Sigmoid colon (tissue), 7 donors: ENCODE measurements at regions of chr10 and their contacts with region 1.

Region 1: GRCh38 chr10:78510566-78511323 is 477.1 kb downstream of the RPS24 start:
- DNase-seq: no peak
- H3K4me3 ChIP-seq: no peak overlapping the region
- H3K27ac ChIP-seq: peak overlapping the region; percentile 45 to 86 (median 82)
- H3K4me1 ChIP-seq: peaks cover 5 to 93% (median 88%) of the 10 kb centered on the region in 4 donors
- H3K27me3 ChIP-seq: no peaks in the 10 kb centered on the region
- CTCF ChIP-seq: no peak
- EP300 ChIP-seq: no peak
- POLR2A ChIP-seq: no peak

Region 2: DNA sequence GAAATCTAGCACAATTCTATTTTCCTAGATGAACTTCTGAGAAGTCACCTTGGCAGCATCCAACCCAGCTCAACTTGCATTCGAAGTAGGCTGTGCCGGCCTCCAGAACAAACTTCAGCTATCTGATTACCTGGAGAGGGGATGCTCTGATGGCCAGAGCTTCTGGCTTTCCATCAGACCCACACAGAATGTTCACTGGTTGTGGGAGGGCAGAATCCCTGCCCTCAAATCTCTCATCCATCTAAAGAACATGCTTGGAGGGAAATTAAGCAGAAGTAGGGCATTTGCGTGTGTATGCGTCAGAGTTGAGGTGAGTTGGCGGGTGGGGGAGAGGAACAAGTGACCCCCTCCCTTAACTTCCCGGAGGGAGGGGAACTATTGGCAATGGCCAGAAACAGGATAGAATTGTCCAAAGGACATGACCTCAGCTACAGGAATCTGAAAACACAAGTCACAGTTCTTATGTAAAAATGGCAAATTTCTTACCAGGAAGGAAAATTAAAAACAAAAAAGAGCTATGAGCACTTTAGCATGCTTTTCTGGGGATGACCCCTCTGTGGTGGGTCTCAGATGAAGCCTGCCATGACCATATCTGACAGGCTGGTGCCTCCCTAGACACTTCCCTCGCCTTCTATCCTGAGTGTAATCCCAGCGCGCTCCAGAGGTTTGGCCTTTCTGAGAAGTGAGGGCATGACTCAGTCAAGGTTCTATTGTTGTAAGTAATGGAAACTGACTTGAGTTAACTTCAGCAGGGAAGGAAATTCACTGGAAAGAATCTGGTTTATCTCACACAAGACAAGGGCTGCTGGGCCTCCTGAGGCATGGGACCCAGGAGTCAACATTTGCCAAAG is 198.3 kb before region 1 on chr10:
- intact Hi-C with region 1: loop called (anchors 5 kb)
- DNase-seq: peak; percentile 87
- H3K4me3 ChIP-seq: no peak overlapping the region
- H3K27ac ChIP-seq: peak overlapping the region; percentile 16 to 93 (median 88)
- H3K4me1 ChIP-seq: peaks cover 0 to 69% (median 49%) of the 10 kb centered on the region in 4 donors
- H3K27me3 ChIP-seq: no peaks in the 10 kb centered on the region
- CTCF ChIP-seq: peak in 1 of 4 experiments; percentile 16
- EP300 ChIP-seq: peak; percentile 66 to 92 (median 84)
- POLR2A ChIP-seq: no peak

Region 3: DNA sequence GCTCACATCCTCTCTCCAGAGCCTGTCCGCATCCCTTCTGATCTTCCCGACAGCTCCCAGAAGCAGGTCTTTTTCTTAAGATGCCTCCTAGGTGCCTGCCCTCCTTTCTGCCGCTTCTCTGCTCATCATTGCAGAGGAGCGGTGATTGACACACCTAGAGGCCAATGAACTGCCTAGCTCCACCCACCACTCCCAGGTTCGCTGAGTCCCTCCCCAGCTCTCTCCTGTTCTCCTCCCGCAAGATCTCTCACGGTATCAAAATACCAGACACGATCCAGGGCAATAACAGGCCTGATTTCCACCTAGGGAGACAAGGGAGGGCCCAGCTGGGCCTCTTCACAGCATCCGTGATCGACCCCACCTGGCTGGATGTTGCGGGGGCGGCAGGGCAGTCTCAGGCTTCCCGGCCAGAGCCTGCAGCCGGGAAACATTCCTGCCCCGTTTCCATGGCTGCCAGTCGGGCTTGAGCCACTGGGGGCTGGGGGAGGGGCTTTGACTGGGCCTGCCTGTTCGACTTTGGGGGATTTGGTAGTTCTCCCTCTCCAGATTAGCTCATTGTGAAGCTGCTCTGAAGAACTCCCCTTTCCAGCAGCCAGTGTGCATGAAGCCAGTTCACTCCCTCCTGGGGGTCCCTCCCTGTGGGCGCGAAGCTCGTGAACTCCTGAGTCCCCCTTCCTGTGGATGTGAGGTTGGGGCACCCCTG is 103.6 kb before region 1 on chr10:
- intact Hi-C with region 1: no loop called
- DNase-seq: peak; percentile 89
- H3K4me3 ChIP-seq: peak overlapping the region in 3 of 4 donors; percentile 18 to 24 (median 20)
- H3K27ac ChIP-seq: peak overlapping the region; percentile 30 to 80 (median 76)
- H3K4me1 ChIP-seq: peaks cover 0 to 35% (median 30%) of the 10 kb centered on the region in 4 donors
- H3K27me3 ChIP-seq: no peaks in the 10 kb centered on the region
- CTCF ChIP-seq: no peak
- EP300 ChIP-seq: no peak
- POLR2A ChIP-seq: no peak

Region 4: GRCh38 chr10:79155301-79156081 is 644.7 kb after region 1 on chr10:
- intact Hi-C with region 1: no loop called
- DNase-seq: peak; percentile 79
- H3K4me3 ChIP-seq: no peak overlapping the region
- H3K27ac ChIP-seq: peak overlapping the region; percentile 85 to 92 (median 88)
- H3K4me1 ChIP-seq: peaks cover 0 to 100% (median 96%) of the 10 kb centered on the region in 4 donors
- H3K27me3 ChIP-seq: no peaks in the 10 kb centered on the region
- CTCF ChIP-seq: no peak
- EP300 ChIP-seq: no peak
- POLR2A ChIP-seq: no peak